ENCODE measurements at regions of chr3 and their contacts with region 1.

Region 1: GRCh38 chr3:47475570-47476329 is at the start of gene SCAP:
- DNase-seq: peak; percentile 95
- H3K4me3 Mint-ChIP-seq: peak within 1 kb of the TSS; percentile 92
- H3K27ac Mint-ChIP-seq: peak within 1 kb of the TSS; percentile 93
- H3K4me1 Mint-ChIP-seq: peaks cover 26% of the 10 kb centered on the region
- H3K27me3 Mint-ChIP-seq: no peaks in the 10 kb centered on the region
- total RNA-seq, gene SCAP: 86.3 and 91.2 TPM in 2 replicates

Region 2: DNA sequence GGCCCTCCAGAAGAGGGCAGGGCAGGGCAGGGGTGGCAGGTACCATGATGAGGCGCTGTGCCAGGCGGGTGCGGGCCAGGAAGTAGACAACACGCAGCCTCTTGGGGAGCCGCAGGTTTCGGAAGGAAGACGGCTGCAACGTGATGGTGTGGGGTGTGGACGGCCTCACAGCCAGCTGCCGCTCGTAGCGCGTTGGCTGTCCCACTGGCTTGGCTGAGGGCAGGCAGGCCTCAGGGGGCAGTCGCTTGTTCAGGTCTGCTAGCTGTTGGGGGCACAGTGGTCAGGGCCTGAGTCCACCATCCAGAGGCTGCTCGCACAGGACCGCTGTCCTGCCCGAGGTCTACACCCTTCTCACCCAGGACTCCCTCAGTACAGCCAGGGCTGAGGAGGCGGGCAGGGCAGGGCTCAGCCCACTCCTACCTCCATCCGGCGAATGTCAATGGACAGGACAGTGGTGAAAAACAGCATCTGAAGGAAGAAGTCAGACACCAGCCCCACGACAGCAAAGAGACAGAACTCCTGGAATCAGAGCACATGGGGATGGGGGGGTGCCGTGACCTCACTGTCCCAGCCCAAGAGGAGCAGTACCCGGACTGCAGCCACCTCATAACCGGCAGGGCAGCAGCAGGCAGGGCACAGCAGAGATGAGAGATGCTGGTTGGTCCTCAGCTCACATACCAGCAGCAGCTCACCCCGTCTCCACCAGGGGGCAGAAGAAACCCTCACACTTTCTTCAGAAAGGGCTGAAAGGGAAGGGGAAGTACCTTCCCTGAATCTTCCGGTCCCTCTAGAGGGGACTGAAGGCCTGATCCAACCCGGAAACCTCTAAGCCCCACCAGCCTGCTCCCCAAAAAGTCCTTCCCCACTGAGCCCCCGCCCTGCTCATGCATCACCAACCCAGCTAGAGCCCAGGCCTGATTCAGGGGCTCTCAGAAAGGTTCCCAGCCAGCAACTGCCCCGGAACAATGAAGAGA is 55.0 kb before region 1 on chr3:
- intact Hi-C with region 1: loop called (anchors 1 kb)
- DNase-seq: peak; percentile 83
- H3K4me3 Mint-ChIP-seq: peak overlapping the region; percentile 43
- H3K27ac Mint-ChIP-seq: peak overlapping the region; percentile 98
- H3K4me1 Mint-ChIP-seq: peaks cover 22% of the 10 kb centered on the region
- H3K27me3 Mint-ChIP-seq: no peaks in the 10 kb centered on the region

Region 3: DNA sequence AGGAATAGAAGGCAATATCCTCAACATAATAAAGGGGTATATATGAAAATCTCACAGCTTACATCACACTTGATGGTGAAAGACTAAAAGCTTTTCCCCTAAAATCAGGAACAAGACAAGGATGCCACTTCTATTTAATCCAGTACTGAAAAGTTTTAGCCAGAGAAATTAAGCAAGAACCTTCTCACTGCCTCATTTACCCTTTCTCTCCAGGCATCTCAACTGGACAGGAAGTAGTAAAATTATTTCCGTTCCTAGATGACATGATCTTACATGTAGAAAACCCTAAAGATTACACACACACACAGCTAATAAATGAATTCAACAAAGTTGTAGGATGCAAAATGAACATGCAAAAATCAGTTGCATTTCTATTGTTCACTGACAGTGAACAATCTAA is 11.2 kb before region 1 on chr3:
- intact Hi-C with region 1: loop called (anchors 1 kb)
- DNase-seq: no peak
- H3K4me3 Mint-ChIP-seq: no peak overlapping the region
- H3K27ac Mint-ChIP-seq: no peak overlapping the region
- H3K4me1 Mint-ChIP-seq: peaks cover 21% of the 10 kb centered on the region
- H3K27me3 Mint-ChIP-seq: no peaks in the 10 kb centered on the region

Measured in activated T-helper 1 cell treated with anti-CD3 and anti-CD28 coated beads, Interleukin-12 subunit alpha, Interleukin-12 subunit beta, Interleukin-2, Interleukin-4 antibody, amounts not matched to agents 30 ng/mL and 10 ng/mL and 1 ng/mL, durations not matched to agents 14 hours and 24 hours and 36 hours (primary cell).